Thyroid gland (tissue), 4 donors: ENCODE measurements at regions of chr1 and their contacts with region 1.

Region 1: DNA sequence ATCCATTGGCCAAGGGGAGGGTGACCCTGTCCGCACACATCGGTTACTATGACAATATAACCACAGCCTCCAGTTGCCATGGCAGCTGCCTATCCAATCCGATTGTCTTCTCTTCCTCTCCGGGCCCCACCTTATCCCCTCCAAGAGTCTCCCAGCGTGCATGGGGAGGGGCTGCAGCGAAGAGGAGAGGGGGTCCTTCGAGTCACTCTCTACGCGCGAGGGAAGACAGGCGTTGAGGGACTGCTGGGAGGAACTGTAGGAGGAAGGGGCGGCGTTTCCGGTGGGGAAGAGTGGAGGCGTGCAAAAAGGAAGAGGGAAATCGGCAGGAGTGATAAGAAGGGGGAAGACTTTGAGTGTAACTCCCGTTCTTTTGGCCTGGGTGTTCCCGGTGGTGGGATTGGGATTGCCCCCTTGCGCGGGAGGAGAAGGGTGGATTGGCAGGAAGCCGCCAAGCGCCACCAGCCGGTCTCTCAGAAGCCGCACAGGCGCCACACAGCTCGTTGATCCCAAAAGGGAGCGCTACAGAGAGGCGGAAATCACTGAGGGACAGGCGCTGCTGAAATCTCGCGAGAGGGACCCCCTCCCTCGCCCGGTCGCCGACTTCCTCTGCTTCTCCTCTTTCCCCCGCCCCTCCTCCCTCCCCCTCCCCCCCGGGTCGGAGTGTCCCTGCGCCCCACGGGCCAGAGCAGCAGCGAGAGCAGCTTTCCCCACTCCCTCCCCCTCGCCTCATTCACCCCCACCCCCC is 384 bp upstream of the SMG7 start:
- DNase-seq: peak; percentile 98 to 99
- H3K4me3 ChIP-seq: peak overlapping the region; percentile 81 to 95 (median 91)
- H3K27ac ChIP-seq: peak overlapping the region; percentile 96 to 97 (median 96)
- H3K4me1 ChIP-seq: peaks cover 0 to 11% of the 10 kb centered on the region in 2 donors
- H3K27me3 ChIP-seq: no peaks in the 10 kb centered on the region
- CTCF ChIP-seq: peak in 2 of 6 experiments; percentile 7 to 22
- POLR2A ChIP-seq: peak; percentile 1 to 50

Region 2: GRCh38 chr1:183318433-183318832 is 153.5 kb before region 1 on chr1:
- intact Hi-C with region 1: no loop called
- DNase-seq: peak; percentile 71 to 85
- H3K4me3 ChIP-seq: no peak overlapping the region
- H3K27ac ChIP-seq: peak overlapping the region in 2 of 3 donors; percentile 74 to 82
- H3K4me1 ChIP-seq: peaks cover 9 to 18% of the 10 kb centered on the region in 2 donors
- H3K27me3 ChIP-seq: no peaks in the 10 kb centered on the region
- CTCF ChIP-seq: peak in 4 of 6 experiments; percentile 57 to 76 (median 66)
- POLR2A ChIP-seq: no peak

Region 3: DNA sequence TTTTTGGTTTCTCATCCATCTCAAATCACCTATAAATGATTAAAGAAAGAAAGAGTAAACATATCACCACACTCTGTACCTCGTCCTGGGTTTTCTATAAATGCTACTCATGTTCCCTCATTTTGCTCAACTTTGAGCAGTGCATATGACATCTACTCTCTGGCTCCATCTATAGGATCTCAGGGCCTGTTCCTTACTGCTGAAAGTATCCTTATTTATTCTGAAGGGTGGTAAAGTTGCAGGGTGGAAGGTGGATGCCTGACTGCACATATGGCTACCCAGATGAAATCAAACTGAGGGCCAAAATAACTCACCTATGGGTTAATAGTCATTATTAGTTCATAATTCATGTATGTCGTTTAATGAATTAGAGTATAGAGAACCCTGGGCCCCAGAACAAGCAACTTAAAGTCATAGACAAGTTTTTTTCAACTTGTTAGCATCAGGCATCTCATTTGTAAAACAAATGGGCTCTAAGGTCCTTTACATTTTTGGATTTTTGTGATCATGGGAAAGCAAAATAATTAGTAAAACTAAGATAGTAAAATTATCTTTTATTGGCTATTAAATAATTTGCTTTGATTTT is 71.8 kb after region 1 on chr1:
- intact Hi-C with region 1: loop called (anchors 10 kb)
- DNase-seq: no peak
- H3K4me3 ChIP-seq: no peak overlapping the region
- H3K27ac ChIP-seq: no peak overlapping the region
- H3K4me1 ChIP-seq: peaks cover 0 to 7% of the 10 kb centered on the region in 2 donors
- H3K27me3 ChIP-seq: no peaks in the 10 kb centered on the region
- CTCF ChIP-seq: peak in 5 of 6 experiments; percentile 21 to 48 (median 30)
- POLR2A ChIP-seq: no peak

Region 4: GRCh38 chr1:183593356-183593755 is 121.4 kb after region 1 on chr1:
- intact Hi-C with region 1: no loop called
- DNase-seq: no peak
- H3K4me3 ChIP-seq: no peak overlapping the region
- H3K27ac ChIP-seq: no peak overlapping the region
- H3K4me1 ChIP-seq: no peaks in the 10 kb centered on the region
- H3K27me3 ChIP-seq: no peaks in the 10 kb centered on the region
- CTCF ChIP-seq: no peak
- POLR2A ChIP-seq: no peak

Region 5: GRCh38 chr1:183622884-183623785 is 151.2 kb after region 1 on chr1:
- intact Hi-C with region 1: loop called (anchors 5 kb)
- DNase-seq: peak; percentile 57 to 60
- H3K4me3 ChIP-seq: no peak overlapping the region
- H3K27ac ChIP-seq: no peak overlapping the region
- H3K4me1 ChIP-seq: peaks cover 10 to 20% of the 10 kb centered on the region in 2 donors
- H3K27me3 ChIP-seq: no peaks in the 10 kb centered on the region
- CTCF ChIP-seq: peak in 5 of 6 experiments; percentile 3 to 65 (median 56)
- POLR2A ChIP-seq: no peak

Region 6: GRCh38 chr1:183635606-183636333 is 163.9 kb after region 1 on chr1 and contains the start of gene ARPC5:
- intact Hi-C with region 1: loop called (anchors 5 kb)
- DNase-seq: peak; percentile 96
- H3K4me3 ChIP-seq: peak within 1 kb of the TSS; percentile 79 to 83 (median 82)
- H3K27ac ChIP-seq: peak within 1 kb of the TSS; percentile 95 to 96 (median 96)
- H3K4me1 ChIP-seq: peaks cover 25 to 32% of the 10 kb centered on the region in 2 donors
- H3K27me3 ChIP-seq: no peaks in the 10 kb centered on the region
- CTCF ChIP-seq: no peak
- POLR2A ChIP-seq: peak; percentile 61 to 98
- total RNA-seq, gene ARPC5: 70.5 to 158 (median 95.7) TPM